Right ventricle myocardium inferior (tissue), 1 donor: ENCODE measurements at regions of chr1 and their contacts with region 1.

Region 1: DNA sequence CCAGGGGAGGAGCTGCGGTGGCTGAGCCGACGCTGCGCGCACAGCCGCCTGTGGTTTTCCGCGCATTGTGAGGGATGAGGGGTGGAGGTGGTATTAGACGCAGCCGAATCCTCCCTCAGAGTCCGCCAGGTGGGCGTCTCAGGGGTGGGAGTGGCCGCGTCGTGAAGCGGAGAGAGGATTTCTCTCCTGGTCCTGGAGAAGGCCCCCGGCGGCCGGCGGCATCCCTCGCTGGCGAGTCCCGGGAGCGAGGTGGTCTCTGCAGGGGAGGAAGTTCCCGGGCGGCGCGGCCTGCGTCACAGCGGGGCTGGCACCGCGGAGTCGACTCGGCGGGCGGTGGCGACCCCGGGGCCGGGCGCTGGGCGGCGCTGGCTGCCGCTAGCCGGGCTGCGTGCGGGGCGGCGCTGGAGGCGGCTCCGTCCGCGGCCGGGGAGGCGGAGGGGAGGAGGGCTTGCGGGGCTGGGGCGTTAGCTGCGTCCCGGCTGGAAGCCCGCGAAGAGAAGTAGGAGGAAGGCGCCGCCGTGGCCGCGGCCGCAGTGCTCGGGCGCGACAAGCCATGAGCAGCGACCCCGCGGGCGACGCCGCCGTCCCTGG is at the start of gene LRRC8C:
- DNase-seq: peak; percentile 93
- ATAC-seq: peak; percentile 97
- total RNA-seq, gene LRRC8C: 7.7 TPM

Region 2: DNA sequence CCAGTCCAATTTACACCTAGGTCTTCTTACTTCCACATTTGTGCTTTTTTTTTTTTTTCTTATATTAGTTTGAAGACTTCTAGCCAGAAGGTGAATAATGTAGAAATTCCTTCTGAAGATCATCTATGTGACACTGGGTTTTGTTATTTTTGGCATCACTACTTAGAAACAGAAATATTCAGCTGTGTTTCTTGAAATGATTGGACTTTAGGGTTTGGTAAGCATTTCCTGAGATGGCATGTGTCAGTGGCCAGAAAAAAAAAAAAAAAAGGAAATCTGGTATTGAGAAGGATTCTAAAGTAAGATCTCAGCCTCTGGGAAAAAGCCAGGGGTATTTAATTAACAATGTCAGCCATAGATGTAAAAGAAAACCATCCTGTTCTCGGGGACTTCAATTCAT is 43.2 kb before region 1 on chr1:
- intact Hi-C with region 1: no loop called
- DNase-seq: no peak
- ATAC-seq: no peak

Region 3: GRCh38 chr1:89615676-89616598 is 16.8 kb before region 1 on chr1:
- intact Hi-C with region 1: loop called (anchors 2 kb)
- DNase-seq: no peak
- ATAC-seq: peak; percentile 51

Region 4: DNA sequence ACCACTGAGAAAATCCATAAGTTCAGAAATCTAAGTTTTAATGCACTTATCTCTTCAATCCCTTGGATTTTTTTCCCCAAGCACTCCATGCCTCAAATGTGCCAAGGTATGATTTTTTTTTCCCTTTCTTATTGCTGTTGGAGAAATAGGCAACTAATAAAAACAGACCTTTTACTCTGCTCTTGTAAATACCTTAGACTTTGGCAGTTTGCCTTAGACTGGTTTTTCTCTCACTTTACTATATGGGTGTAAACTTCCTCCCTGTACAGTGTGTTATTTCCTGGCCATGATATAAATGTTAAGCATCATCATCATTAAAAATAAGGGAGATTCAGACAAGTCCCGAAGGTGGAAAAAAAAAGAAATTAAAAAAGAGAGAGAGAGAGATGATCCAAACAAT is 65.9 kb after region 1 on chr1:
- intact Hi-C with region 1: loop called (anchors 5 kb)
- DNase-seq: no peak
- ATAC-seq: no peak

Region 5: GRCh38 chr1:89728381-89728780 is 95.6 kb after region 1 on chr1:
- intact Hi-C with region 1: loop called (anchors 2 kb)
- DNase-seq: no peak
- ATAC-seq: no peak

Region 6: DNA sequence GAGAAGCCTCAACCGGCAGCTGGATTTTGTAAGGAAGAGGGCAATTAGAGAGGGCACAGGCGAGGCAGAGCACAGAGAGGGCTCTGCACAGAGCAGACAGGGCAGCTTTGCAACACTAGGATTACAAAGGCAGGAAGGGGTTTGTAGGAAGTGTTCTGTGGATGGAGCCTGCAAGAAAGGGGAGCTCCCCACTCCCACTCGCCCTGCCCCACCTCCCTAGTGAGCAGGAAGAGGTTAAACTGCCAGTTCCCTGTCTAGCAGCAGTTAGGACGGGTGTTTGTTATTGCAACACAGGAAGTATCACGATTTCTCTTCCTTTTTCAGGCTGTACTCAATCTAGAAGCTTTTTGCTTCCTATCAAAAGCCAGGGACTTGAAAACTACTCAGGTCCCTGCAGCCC is 124.8 kb after region 1 on chr1:
- intact Hi-C with region 1: loop called (anchors 1 kb)
- DNase-seq: peak; percentile 84
- ATAC-seq: peak; percentile 72

Region 7: DNA sequence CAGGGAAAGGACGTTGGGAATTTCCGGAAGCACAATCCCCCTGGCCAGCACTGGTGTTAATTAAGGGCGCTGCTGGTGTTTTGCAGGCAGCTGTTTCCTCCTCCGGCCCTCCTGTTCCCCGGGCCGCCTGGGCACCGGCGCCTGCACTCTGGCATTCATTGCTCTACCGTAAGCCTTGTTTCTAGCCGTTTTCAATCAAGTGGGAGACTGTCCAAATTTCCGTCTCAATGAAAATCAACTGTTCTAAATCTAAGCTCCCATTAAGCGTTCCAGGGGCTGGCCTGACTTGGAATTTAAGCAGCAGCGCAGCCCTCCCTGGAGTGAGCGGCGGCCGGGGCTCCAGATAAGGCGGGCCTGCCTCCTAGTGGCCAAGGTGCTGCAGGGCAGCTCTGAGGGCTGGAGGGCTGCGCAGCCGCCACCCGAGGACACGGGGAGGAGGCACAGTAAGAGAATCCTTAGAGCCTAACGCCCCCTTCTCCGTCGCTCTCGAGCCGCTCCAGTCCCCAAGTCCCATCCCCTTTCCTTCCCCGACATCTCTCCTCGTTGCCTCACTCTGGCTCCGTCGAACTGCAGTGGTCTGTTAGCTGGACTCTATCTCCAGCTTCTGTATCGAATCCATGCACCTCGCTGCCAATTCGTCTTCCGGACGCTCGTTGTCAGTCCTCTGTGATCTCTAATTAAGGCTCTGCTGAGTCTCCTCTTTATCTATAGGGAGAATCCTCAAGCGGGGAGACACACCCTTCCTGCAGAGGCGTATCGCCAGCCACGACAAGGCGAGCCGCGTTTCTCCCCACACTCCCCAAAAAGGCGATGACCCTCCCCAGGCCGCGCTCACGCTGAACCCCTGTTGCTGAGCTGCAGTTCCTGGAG is 130.3 kb after region 1 on chr1:
- intact Hi-C with region 1: loop called (anchors 1 kb)
- DNase-seq: peak; percentile 93
- ATAC-seq: peak; percentile 98

Region 8: DNA sequence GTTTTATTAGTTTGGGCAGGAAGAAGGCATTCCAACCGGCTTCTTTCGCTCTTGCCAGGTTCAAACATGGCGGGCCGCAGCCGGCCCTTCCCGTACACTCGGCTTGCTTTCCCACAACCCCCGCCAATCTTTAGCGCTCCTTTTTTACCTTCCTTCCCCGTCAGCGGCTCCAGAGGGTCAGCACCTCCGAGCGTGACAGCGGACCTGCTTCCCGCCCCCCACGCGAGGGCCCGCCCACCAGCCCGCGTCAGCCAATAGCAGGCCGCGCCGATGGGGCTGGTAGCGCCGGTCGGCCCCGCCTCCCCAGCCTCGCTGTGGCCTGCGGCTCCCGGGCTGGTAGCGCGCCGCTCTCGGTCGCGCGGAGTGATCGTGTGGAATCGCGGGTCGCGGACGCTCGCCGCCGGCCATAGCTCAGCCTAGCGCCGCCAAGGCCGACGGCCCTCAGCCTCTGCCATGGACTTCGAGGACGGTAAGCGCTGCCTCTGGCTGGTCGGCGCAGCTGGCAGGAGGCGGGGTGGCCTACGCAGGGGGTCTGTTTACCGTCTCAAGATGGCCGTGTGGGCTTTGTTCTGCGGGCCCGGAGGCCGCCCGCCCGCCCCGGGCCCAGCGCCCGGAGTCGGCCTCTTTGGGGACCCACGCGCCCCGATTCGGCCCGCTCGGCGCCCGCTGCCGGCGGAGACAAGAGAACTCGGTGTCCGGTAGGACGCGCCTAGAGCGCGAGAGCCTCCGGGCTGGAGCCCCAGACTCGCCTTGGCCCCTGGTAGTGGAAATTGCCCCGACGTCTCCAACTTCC is 362.2 kb after region 1 on chr1 and contains the start of gene ZNF326:
- intact Hi-C with region 1: loop called (anchors 10 kb)
- DNase-seq: peak; percentile 98
- ATAC-seq: peak; percentile 99
- total RNA-seq, gene ZNF326: 17.4 TPM